HepG2 (cell line): ENCODE measurements at regions of chr9 and their contacts with region 1.

Region 1: GRCh38 chr9:124593651-124594058 is 86.5 kb upstream of the NR5A1 start:
- DNase-seq: no peak
- ATAC-seq: peak; percentile 43; the same call in 2 of the 3 replicates
- H3K4me3 ChIP-seq: peak overlapping the region in 1 of 3 experiments; percentile 5; a peak in 2 of 6 replicates
- H3K27ac ChIP-seq: peak overlapping the region; percentile 13
- H3K4me1 ChIP-seq: peaks cover 58% of the 10 kb centered on the region
- H3K27me3 ChIP-seq: no peaks in the 10 kb centered on the region
- CTCF ChIP-seq: no peak
- EP300 ChIP-seq: no peak
- POLR2A ChIP-seq: no peak
- RAD21 ChIP-seq: no peak

Region 2: GRCh38 chr9:124551472-124552272 is 42.0 kb before region 1 on chr9:
- CTCF ChIA-PET with region 1: no interaction called
- POLR2A ChIA-PET with region 1: no interaction called
- in situ Hi-C with region 1: no loop called
- intact Hi-C with region 1: loop called (anchors 5 kb)
- DNase-seq: peak; percentile 53
- ATAC-seq: peak; percentile 94
- H3K4me3 ChIP-seq: no peak overlapping the region
- H3K27ac ChIP-seq: no peak overlapping the region
- H3K4me1 ChIP-seq: peaks cover 11% of the 10 kb centered on the region
- H3K27me3 ChIP-seq: no peaks in the 10 kb centered on the region; a peak in 1 of 5 replicates
- CTCF ChIP-seq: peak; percentile 87
- EP300 ChIP-seq: no peak
- POLR2A ChIP-seq: no peak
- RAD21 ChIP-seq: peak; percentile 88

Region 3: DNA sequence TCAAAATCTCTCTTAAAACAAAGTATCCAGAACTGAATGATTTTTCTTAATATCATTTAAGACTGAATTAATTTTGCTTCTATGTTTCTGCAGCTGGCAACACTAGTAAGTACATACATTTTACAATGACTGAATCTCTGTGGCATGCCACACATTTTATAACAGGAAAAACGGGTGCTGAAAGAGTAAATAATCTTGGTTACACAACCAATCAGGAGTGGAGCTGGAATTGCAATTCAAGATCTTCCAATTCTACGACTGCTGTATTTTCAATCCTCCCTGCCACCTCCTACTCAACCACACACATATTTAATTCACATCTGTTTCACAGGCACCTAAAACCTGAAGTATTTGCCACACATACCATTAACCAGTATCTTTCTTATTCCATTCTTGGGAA is 33.8 kb before region 1 on chr9:
- CTCF ChIA-PET with region 1: no interaction called
- POLR2A ChIA-PET with region 1: no interaction called
- in situ Hi-C with region 1: no loop called
- intact Hi-C with region 1: loop called (anchors 5 kb)
- DNase-seq: no peak
- ATAC-seq: no peak
- H3K4me3 ChIP-seq: no peak overlapping the region
- H3K27ac ChIP-seq: no peak overlapping the region
- H3K4me1 ChIP-seq: peaks cover 46% of the 10 kb centered on the region
- H3K27me3 ChIP-seq: no peaks in the 10 kb centered on the region
- CTCF ChIP-seq: no peak
- EP300 ChIP-seq: no peak
- POLR2A ChIP-seq: no peak
- RAD21 ChIP-seq: no peak

Region 4: DNA sequence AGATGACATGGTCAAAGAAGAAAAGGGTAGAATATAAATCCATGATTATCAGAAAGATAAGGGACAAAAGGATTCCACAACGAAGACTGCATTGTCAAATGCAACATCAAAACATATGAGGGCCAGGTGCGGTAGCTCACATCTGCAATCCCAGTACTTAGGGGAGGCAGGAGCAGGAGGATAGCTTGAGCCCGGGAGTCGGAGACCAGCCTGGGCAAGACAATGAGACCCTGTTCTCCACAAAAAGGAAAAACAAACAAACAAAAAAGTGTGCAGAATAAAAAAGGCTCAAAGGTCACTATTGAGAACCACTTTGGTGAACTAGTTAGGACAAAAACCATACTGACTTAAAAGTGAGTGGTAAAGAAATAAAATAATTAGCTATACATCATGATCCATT is 26.3 kb before region 1 on chr9:
- CTCF ChIA-PET with region 1: no interaction called
- POLR2A ChIA-PET with region 1: interaction called, 10 read pairs
- in situ Hi-C with region 1: no loop called
- intact Hi-C with region 1: loop called (anchors 5 kb)
- DNase-seq: peak; percentile 89
- ATAC-seq: peak; percentile 86
- H3K4me3 ChIP-seq: no peak overlapping the region
- H3K27ac ChIP-seq: peak overlapping the region; percentile 74
- H3K4me1 ChIP-seq: peaks cover 80% of the 10 kb centered on the region
- H3K27me3 ChIP-seq: no peaks in the 10 kb centered on the region
- CTCF ChIP-seq: no peak
- EP300 ChIP-seq: no peak
- POLR2A ChIP-seq: no peak
- RAD21 ChIP-seq: no peak

Region 5: GRCh38 chr9:124658165-124659017 is 64.7 kb after region 1 on chr9:
- CTCF ChIA-PET with region 1: no interaction called
- POLR2A ChIA-PET with region 1: interaction called, 13 read pairs
- in situ Hi-C with region 1: no loop called
- intact Hi-C with region 1: no loop called
- DNase-seq: peak; percentile 76
- ATAC-seq: peak; percentile 73
- H3K4me3 ChIP-seq: peak overlapping the region; percentile 55 to 73 (median 69)
- H3K27ac ChIP-seq: peak overlapping the region; percentile 94
- H3K4me1 ChIP-seq: peaks cover 63% of the 10 kb centered on the region
- H3K27me3 ChIP-seq: no peaks in the 10 kb centered on the region
- CTCF ChIP-seq: no peak
- EP300 ChIP-seq: 0 out of 4 replicates have a peak, but pooled peaks of 1 of the 2 experiments have one; percentile 3
- POLR2A ChIP-seq: peak; percentile 45 to 86; a peak in 3 of 4 replicates
- RAD21 ChIP-seq: no peak